CD8-positive, alpha-beta memory T cell (primary cell): ENCODE measurements at regions of chr10 and their contacts with region 1.

Region 1: GRCh38 chr10:70169649-70170364 is 507 bp downstream of the SAR1A start:
- DNase-seq: peak in 1 of 5 donors; percentile 12
- H3K4me3 ChIP-seq: peak overlapping the region; percentile 78
- H3K4me3 Mint-ChIP-seq: peak overlapping the region; percentile 83 to 97 (median 93)
- H3K27ac ChIP-seq: peak overlapping the region; percentile 80
- H3K27ac Mint-ChIP-seq: peak overlapping the region; percentile 94 to 98 (median 96)
- H3K4me1 ChIP-seq: peaks cover 62% of the 10 kb centered on the region
- H3K4me1 Mint-ChIP-seq: peaks cover 59 to 73% (median 72%) of the 10 kb centered on the region in 3 donors
- H3K27me3 ChIP-seq: no peaks in the 10 kb centered on the region
- H3K27me3 Mint-ChIP-seq: no peaks in the 10 kb centered on the region

Region 2: GRCh38 chr10:70093335-70093944 is 76.4 kb before region 1 on chr10:
- CTCF ChIA-PET with region 1: no interaction called
- POLR2A ChIA-PET with region 1: interaction called, 10 read pairs
- DNase-seq: peak in 2 of 5 donors; percentile 47 to 52
- H3K4me3 ChIP-seq: peak overlapping the region; percentile 53
- H3K4me3 Mint-ChIP-seq: peak overlapping the region; percentile 74 to 97 (median 84)
- H3K27ac ChIP-seq: no peak overlapping the region
- H3K27ac Mint-ChIP-seq: peak overlapping the region; percentile 90 to 100 (median 96)
- H3K4me1 ChIP-seq: peaks cover 32% of the 10 kb centered on the region
- H3K4me1 Mint-ChIP-seq: peaks cover 42 to 63% (median 52%) of the 10 kb centered on the region in 3 donors
- H3K27me3 ChIP-seq: no peaks in the 10 kb centered on the region
- H3K27me3 Mint-ChIP-seq: no peaks in the 10 kb centered on the region

Region 3: GRCh38 chr10:70206762-70207161 is 37.0 kb after region 1 on chr10:
- CTCF ChIA-PET with region 1: no interaction called
- POLR2A ChIA-PET with region 1: no interaction called
- DNase-seq: no peak
- H3K4me3 ChIP-seq: no peak overlapping the region
- H3K4me3 Mint-ChIP-seq: no peak overlapping the region
- H3K27ac ChIP-seq: no peak overlapping the region
- H3K27ac Mint-ChIP-seq: peak overlapping the region in 1 of 8 donors; percentile 73
- H3K4me1 ChIP-seq: no peaks in the 10 kb centered on the region
- H3K4me1 Mint-ChIP-seq: no peaks in the 10 kb centered on the region
- H3K27me3 ChIP-seq: no peaks in the 10 kb centered on the region
- H3K27me3 Mint-ChIP-seq: no peaks in the 10 kb centered on the region

Region 4: GRCh38 chr10:70283445-70284399 is 113.9 kb after region 1 on chr10 and contains the start of gene NPFFR1:
- CTCF ChIA-PET with region 1: no interaction called
- POLR2A ChIA-PET with region 1: no interaction called
- DNase-seq: no peak
- H3K4me3 ChIP-seq: no peak within 1 kb of the TSS
- H3K4me3 Mint-ChIP-seq: no peak within 1 kb of the TSS
- H3K27ac ChIP-seq: no peak within 1 kb of the TSS
- H3K27ac Mint-ChIP-seq: no peak within 1 kb of the TSS
- H3K4me1 ChIP-seq: no peaks in the 10 kb centered on the region
- H3K4me1 Mint-ChIP-seq: peaks cover 0 to 5% (median 0%) of the 10 kb centered on the region in 3 donors
- H3K27me3 ChIP-seq: peaks cover 14% of the 10 kb centered on the region
- H3K27me3 Mint-ChIP-seq: peaks cover 41 to 67% of the 10 kb centered on the region in 2 donors
- total RNA-seq, gene NPFFR1: not detected